ENCODE measurements at regions of chr11 and their contacts with region 1.

Region 1: DNA sequence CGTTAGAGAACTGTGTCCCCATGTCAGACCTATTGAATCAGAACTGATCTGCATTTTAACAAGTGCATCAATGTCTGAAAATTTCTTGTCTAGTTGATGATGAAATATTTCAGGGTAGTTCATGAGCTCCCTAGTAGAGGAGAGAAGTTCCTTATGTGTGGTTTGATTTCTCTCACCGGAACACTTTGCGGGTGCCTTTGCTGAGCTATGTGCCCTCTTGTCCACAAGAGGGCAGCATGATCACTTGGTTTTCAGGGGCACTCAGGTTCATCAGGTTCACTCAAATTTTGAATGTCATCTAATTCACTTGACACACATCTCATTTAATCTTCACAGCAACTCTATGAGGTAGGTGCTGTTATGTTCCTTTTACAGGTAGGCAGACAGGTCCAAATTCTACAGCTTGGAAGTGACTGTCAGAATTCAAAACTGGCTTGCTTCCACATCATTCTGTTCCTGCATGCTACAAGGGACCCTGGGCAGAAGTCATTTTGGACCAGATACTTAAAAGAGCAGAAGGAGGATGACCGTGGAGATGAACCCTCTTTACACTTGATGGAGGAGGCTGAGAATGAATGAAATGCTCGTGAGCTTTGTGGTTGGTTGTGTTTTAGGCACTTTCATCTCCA is 55.6 kb downstream of the P4HA3 start:
- DNase-seq: peak in 2 of 3 donors; percentile 18 to 68
- ATAC-seq: peak; percentile 44 to 71
- H3K4me3 ChIP-seq: no peak overlapping the region
- H3K27ac ChIP-seq: no peak overlapping the region
- H3K4me1 ChIP-seq: no peaks in the 10 kb centered on the region
- H3K27me3 ChIP-seq: no peaks in the 10 kb centered on the region

Region 2: DNA sequence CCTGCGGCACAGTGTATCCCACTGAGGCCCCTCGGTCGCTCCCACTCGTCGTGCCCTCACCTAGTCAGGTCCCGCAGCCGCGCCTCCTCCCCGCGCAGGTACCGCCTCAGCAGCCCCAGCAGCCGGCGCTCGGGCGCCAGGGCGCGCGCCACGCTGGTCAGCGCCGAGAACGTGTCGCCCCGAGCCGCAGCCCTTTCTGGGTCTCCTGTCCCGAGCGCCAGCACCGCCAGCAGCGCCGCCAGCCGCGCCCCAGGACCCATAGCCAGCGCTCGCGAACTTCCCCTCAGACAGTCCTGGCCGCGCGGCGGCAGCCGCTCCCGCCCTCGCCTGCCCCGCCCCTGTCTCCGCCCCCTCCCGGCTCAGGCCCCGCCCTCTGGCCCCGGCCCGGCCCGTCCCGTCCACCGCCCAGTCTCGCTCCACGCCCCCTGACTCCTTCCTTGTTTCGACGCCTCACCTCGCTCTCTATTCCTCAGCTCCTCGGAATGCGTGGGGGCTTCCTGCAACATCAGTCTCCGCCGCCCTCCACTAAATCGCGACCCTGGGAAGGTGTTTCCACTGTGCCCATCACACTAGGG is 55.6 kb after region 1 on chr11 and contains the start of gene P4HA3:
- intact Hi-C with region 1: loop called in 1 of 4 experiments (anchors 10 kb)
- DNase-seq: peak; percentile 75 to 88 (median 84)
- ATAC-seq: peak; percentile 96 to 98
- H3K4me3 ChIP-seq: peak within 1 kb of the TSS; percentile 29
- H3K27ac ChIP-seq: no peak within 1 kb of the TSS
- H3K4me1 ChIP-seq: no peaks in the 10 kb centered on the region
- H3K27me3 ChIP-seq: no peaks in the 10 kb centered on the region
- total RNA-seq, gene P4HA3: 0.21 to 0.72 TPM in 2 of 4 donors, not detected in the others

Region 3: GRCh38 chr11:74570266-74571061 is 314.6 kb after region 1 on chr11:
- intact Hi-C with region 1: loop called in 3 of 4 experiments (anchors 10 kb)
- DNase-seq: peak in 2 of 3 donors; percentile 18 to 64
- ATAC-seq: peak in 1 of 2 donors; percentile 83
- H3K4me3 ChIP-seq: no peak overlapping the region
- H3K27ac ChIP-seq: no peak overlapping the region
- H3K4me1 ChIP-seq: no peaks in the 10 kb centered on the region
- H3K27me3 ChIP-seq: no peaks in the 10 kb centered on the region